Breast epithelium (tissue), 4 donors: ENCODE measurements at regions of chr2 and their contacts with region 1.

Region 1: DNA sequence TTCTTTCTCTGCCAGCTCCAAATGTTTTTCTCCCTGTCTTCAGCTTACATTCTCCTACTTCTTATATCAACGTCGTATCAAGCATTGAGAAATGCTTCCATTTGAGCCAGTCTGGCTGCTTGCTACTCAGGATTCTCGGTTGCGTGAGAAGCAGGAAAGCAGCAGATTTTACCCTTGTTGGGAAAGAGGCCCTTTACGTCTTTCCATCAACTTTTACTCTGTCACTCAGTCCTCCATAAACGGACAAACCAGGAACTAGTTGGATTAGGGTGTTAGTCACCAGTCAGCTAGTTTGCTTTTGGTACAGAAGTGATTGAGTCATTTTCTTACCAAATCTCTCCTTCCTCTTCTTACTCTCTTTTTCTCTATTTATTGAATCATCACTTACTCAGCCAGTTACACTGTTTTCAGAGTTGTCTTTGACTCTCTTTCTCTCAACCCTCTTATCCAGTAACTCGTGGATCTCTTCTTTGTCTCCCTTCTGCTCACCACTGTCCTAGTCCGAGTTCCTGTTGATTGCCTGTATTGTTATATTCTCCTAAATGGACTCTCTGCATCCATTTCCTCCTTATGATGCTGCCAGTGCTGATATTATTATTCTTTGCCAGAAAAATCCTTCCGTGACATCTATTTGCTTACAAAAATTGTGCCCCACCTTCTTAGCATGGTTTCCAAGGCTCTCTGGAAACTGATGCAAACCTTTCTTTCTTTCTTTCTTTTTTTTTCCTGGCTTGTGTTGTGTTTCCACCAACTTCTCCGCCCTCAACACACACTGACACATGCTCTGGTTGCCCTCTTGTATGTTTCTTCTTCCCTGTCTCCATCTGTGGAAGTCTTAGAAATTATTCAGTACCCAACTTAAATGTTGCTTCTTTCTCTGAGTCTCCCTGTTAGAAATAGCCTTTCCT is 61.5 kb downstream of the VRK2 start:
- DNase-seq: no peak
- H3K4me3 ChIP-seq: no peak overlapping the region
- H3K27ac ChIP-seq: no peak overlapping the region
- H3K4me1 ChIP-seq: no peaks in the 10 kb centered on the region
- H3K27me3 ChIP-seq: no peaks in the 10 kb centered on the region
- CTCF ChIP-seq: no peak
- POLR2A ChIP-seq: no peak

Region 2: DNA sequence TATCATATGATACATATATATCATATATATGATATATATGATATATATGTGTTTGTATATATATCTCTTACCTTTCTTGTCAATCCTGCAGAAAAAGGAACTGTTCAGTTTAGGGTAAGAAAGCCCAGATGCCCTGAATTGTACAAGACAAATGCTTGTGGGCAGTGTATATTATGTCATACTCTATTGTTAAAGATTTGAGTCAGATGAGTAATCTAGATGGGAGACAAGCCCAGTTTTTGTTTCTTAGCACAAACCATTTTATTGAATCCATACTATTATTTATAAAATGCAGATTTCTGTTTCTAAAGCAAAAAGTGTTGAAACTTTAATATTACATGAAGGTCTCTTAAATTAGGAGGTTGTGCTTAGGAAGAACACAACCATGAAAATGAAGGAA is 29.2 kb after region 1 on chr2:
- intact Hi-C with region 1: no loop called
- DNase-seq: no peak
- H3K4me3 ChIP-seq: no peak overlapping the region
- H3K27ac ChIP-seq: no peak overlapping the region
- H3K4me1 ChIP-seq: no peaks in the 10 kb centered on the region
- H3K27me3 ChIP-seq: no peaks in the 10 kb centered on the region
- CTCF ChIP-seq: no peak
- POLR2A ChIP-seq: no peak

Region 3: GRCh38 chr2:58156780-58157179 is 48.7 kb after region 1 on chr2:
- intact Hi-C with region 1: no loop called
- DNase-seq: no peak
- H3K4me3 ChIP-seq: no peak overlapping the region
- H3K27ac ChIP-seq: no peak overlapping the region
- H3K4me1 ChIP-seq: no peaks in the 10 kb centered on the region
- H3K27me3 ChIP-seq: no peaks in the 10 kb centered on the region
- CTCF ChIP-seq: no peak
- POLR2A ChIP-seq: no peak

Region 4: DNA sequence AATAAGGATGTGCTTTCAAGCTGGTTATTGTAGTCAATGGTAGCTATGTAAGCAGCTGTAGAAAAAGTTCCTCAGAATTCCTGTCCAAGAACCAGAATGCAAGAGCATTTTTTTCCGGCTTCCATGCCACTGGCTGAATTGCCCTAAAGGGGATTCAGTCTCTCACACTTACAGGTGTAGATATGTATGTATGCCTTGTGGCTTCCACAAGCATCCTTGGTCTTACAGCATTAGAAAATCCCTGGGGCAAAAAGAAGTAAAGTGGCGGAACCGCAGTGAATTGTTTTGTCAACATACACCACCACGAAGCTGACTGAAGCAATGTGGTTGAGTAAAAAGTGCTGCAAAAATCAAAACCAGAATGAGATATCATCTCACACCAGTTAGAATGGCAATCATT is 78.4 kb after region 1 on chr2:
- intact Hi-C with region 1: loop called (anchors 5 kb)
- DNase-seq: no peak
- H3K4me3 ChIP-seq: no peak overlapping the region
- H3K27ac ChIP-seq: no peak overlapping the region
- H3K4me1 ChIP-seq: no peaks in the 10 kb centered on the region
- H3K27me3 ChIP-seq: no peaks in the 10 kb centered on the region
- CTCF ChIP-seq: no peak
- POLR2A ChIP-seq: no peak